AG04449 (cell line): ENCODE measurements at regions of chr3 and their contacts with region 1.

Region 1: DNA sequence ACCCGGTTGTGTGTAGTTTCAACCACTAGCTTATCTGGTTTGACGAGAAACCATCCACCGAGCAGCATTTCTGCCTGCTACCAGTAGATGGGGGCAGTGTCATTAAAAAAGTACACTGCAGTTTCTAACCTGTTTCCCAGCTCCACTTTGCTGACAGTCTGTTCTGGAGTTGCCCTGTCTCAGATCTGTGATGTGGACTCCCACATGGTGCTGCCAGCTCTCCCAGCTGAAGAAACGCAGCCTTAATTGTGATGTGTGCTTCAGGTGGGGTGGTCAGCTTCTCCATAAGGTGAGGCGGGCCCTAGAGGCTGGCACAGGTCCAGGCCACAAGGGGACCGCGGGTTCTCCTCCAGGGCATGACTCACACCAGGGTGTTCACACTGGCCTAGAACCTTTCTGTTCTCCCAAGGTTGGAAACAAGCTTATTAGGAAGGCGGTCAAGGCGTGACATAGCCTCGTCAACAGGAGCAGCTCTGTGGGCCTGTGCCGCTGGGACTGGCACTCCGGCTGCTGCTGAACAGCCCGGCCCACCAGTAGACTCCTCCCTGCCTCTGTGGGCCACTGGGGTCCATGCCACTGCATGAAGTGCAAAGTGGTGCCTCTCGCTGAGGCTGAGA is 2.9 kb upstream of the FAM43A start:
- DNase-seq: peak; percentile 53
- H3K4me3 ChIP-seq: no peak overlapping the region; the same call in 1 of the 2 replicates
- CTCF ChIP-seq: peak; percentile 79

Region 2: DNA sequence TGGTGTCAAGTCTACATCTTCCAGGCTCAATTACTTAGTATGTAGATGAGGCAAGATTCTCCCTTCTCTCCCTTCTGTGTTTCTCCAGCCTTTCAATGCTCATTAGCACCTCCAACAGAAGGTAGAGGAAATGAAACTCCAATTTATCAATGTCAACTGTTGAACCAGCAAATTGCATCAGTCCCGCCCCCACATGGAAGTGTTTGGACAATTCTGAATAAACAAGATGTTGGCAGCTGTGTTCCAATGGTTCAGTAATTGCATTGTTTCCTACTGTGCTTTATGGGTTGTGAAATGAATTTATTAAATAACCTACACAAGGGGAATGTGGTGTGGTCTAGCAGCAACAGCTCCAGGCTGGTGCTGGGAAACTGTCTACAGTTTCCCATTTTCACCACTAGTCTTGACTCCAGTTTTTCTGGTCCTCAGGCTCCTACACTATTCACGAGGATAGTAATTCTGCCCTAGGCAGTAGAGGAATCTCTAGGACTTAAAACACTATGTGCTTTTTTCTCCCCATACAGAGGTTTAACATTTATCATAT is 1857.1 kb before region 1 on chr3:
- CTCF ChIA-PET with region 1: no interaction called
- POLR2A ChIA-PET with region 1: no interaction called
- DNase-seq: no peak
- H3K4me3 ChIP-seq: no peak overlapping the region
- CTCF ChIP-seq: no peak

Region 3: GRCh38 chr3:194661374-194661773 is 21.4 kb before region 1 on chr3:
- CTCF ChIA-PET with region 1: interaction called, 10 read pairs
- POLR2A ChIA-PET with region 1: no interaction called
- DNase-seq: no peak
- H3K4me3 ChIP-seq: no peak overlapping the region
- CTCF ChIP-seq: no peak

Region 4: DNA sequence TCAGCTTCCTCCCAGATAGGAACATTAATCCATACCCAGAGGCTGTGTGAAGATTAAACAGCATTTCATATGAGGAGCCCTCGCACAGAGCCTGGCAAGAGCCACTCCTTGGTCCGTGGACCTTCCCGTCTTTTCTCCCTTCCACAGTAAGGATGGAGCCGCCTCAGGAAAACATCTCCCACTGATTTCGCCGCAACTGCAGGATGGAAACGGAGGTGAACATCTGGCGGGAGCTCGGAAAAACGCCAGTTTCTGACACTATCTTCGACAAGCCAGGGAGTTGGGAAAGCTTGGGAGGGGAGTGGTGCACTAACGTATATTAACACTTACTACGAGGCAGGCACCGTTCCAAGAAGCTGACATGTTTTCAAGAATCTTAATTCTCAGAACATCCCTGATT is 430.2 kb after region 1 on chr3:
- CTCF ChIA-PET with region 1: interaction called, 171 read pairs
- POLR2A ChIA-PET with region 1: interaction called, 5 read pairs
- DNase-seq: no peak
- H3K4me3 ChIP-seq: no peak overlapping the region
- CTCF ChIP-seq: no peak

Region 5: GRCh38 chr3:195207731-195208585 is 525.2 kb after region 1 on chr3:
- CTCF ChIA-PET with region 1: interaction called, 16 read pairs
- POLR2A ChIA-PET with region 1: interaction called, 5 read pairs
- DNase-seq: no peak
- H3K4me3 ChIP-seq: no peak overlapping the region
- CTCF ChIP-seq: no peak

Region 6: GRCh38 chr3:195250473-195251251 is 567.9 kb after region 1 on chr3:
- CTCF ChIA-PET with region 1: interaction called, 81 read pairs
- POLR2A ChIA-PET with region 1: interaction called, 26 read pairs
- DNase-seq: no peak
- H3K4me3 ChIP-seq: no peak overlapping the region
- CTCF ChIP-seq: peak; percentile 12

Region 7: GRCh38 chr3:195522254-195523023 is 839.6 kb after region 1 on chr3:
- CTCF ChIA-PET with region 1: interaction called, 23 read pairs
- POLR2A ChIA-PET with region 1: interaction called, 3 read pairs
- DNase-seq: no peak
- H3K4me3 ChIP-seq: no peak overlapping the region
- CTCF ChIP-seq: peak; percentile 4